ENCODE measurements at regions of chr11 and their contacts with region 1.

Region 1: GRCh38 chr11:44556735-44557409 is 8.6 kb upstream of the CD82 start:
- DNase-seq: peak; percentile 43 to 79 (median 70)
- ATAC-seq: peak; percentile 71
- H3K4me3 ChIP-seq: no peak overlapping the region
- H3K4me3 Mint-ChIP-seq: no peak overlapping the region
- H3K27ac ChIP-seq: no peak overlapping the region
- H3K27ac Mint-ChIP-seq: no peak overlapping the region
- H3K4me1 ChIP-seq: peaks cover 11% of the 10 kb centered on the region
- H3K4me1 Mint-ChIP-seq: peaks cover 11% of the 10 kb centered on the region
- H3K27me3 ChIP-seq: no peaks in the 10 kb centered on the region
- H3K27me3 Mint-ChIP-seq: no peaks in the 10 kb centered on the region
- CTCF ChIP-seq: peak; percentile 76

Region 2: GRCh38 chr11:44434191-44434590 is 122.7 kb before region 1 on chr11:
- CTCF ChIA-PET with region 1: no interaction called
- POLR2A ChIA-PET with region 1: no interaction called
- intact Hi-C with region 1: no loop called
- DNase-seq: no peak
- ATAC-seq: no peak
- H3K4me3 ChIP-seq: no peak overlapping the region
- H3K4me3 Mint-ChIP-seq: no peak overlapping the region
- H3K27ac ChIP-seq: no peak overlapping the region
- H3K27ac Mint-ChIP-seq: no peak overlapping the region
- H3K4me1 ChIP-seq: no peaks in the 10 kb centered on the region
- H3K4me1 Mint-ChIP-seq: no peaks in the 10 kb centered on the region
- H3K27me3 ChIP-seq: peaks cover 0 to 3% of the 10 kb centered on the region in 2 experiments
- H3K27me3 Mint-ChIP-seq: peaks cover 26% of the 10 kb centered on the region
- CTCF ChIP-seq: no peak

Region 3: GRCh38 chr11:44589301-44589700 is 32.4 kb after region 1 on chr11:
- CTCF ChIA-PET with region 1: interaction called, 14 read pairs
- POLR2A ChIA-PET with region 1: no interaction called
- intact Hi-C with region 1: no loop called
- DNase-seq: no peak
- ATAC-seq: no peak
- H3K4me3 ChIP-seq: no peak overlapping the region
- H3K4me3 Mint-ChIP-seq: no peak overlapping the region
- H3K27ac ChIP-seq: no peak overlapping the region
- H3K27ac Mint-ChIP-seq: peak overlapping the region; percentile 13
- H3K4me1 ChIP-seq: peaks cover 6% of the 10 kb centered on the region
- H3K4me1 Mint-ChIP-seq: peaks cover 6% of the 10 kb centered on the region
- H3K27me3 ChIP-seq: no peaks in the 10 kb centered on the region
- H3K27me3 Mint-ChIP-seq: no peaks in the 10 kb centered on the region
- CTCF ChIP-seq: no peak

Region 4: DNA sequence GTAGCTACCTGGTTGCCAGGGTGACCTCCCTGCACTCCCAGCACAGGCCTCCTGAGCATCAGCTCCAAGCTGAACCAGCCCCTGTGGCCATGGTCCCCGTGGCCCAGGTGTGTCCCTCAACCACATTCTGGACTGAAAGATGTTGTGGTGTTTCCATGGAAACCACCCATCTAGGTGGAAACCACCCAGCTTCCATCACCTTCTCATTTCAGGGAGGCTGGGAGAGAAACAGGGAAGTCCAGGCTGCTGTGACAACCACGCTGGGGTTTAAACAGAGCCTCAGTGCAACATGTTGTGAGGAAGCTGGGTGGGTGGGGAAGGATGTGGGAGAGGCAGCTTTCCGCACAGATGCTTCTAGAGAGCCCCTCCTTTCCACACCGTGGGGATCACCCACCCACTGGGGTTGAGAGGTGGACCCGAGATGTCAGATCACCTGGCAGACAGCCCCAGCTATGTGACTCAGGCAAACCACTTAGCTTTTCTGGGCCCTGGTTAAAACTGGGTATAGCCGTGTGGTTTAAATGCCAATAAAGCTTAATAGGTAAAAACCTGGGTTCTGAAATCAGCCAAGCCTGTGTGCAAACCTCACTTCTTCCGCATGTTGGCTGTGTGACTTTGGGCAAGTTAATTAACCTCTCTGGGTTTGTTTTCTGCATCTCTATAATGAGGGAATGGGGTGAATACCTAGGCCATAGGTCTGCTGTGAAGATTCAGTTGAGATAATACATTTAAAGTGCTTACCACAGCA is 55.0 kb after region 1 on chr11:
- CTCF ChIA-PET with region 1: interaction called, 625 read pairs
- POLR2A ChIA-PET with region 1: interaction called, 8 read pairs
- intact Hi-C with region 1: loop called (anchors 1 kb)
- DNase-seq: peak; percentile 25 to 90 (median 79)
- ATAC-seq: peak; percentile 86
- H3K4me3 ChIP-seq: no peak overlapping the region
- H3K4me3 Mint-ChIP-seq: peak overlapping the region; percentile 42
- H3K27ac ChIP-seq: peak overlapping the region in 1 of 2 experiments; percentile 48
- H3K27ac Mint-ChIP-seq: peak overlapping the region; percentile 97
- H3K4me1 ChIP-seq: peaks cover 67% of the 10 kb centered on the region
- H3K4me1 Mint-ChIP-seq: peaks cover 66% of the 10 kb centered on the region
- H3K27me3 ChIP-seq: no peaks in the 10 kb centered on the region
- H3K27me3 Mint-ChIP-seq: no peaks in the 10 kb centered on the region
- CTCF ChIP-seq: no peak

Region 5: DNA sequence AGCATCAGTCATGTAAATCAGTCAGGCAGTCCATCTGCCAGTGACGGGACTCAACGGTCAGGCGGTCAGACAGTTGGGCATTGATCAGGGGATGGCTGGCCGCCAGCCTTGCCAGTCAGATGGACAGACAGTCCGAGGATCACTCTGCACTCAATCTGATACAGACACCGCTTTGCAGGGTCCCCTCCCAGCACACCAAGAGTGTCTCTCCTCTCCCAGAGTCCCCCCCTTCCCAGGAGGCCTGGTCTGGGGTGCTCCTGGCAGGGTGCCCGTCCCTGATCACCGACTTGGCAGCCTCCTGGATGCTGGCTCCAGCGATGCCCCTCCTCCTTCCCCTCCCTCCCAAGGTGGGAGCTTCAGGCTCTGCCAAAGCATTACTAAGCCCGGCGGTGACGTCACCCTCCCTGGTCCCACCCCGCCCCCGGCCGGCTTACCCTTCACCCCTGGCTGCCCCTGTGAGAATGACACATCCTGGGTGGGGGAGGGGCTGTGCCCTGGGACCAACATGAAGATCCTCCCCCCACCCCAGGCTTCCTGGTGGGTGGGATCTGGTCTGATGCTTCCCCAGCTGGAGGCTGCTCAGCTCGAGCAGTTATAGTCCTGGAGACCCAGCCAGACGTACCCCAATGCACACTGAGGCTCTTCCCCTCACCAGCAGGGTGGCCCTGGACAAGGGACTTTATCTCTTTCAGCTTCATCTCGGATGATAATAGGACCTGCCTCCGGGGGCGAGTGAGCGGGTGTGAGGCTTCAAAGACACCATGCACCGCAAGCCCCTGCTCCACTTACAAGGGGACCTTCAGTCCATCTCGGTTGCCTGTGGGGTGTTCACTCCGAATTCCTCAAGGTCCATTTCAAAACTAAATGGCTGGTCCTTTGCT is 77.8 kb after region 1 on chr11:
- CTCF ChIA-PET with region 1: interaction called, 24 read pairs
- POLR2A ChIA-PET with region 1: no interaction called
- intact Hi-C with region 1: no loop called
- DNase-seq: peak in 3 of 9 experiments; percentile 3 to 41 (median 36)
- ATAC-seq: no peak
- H3K4me3 ChIP-seq: no peak overlapping the region
- H3K4me3 Mint-ChIP-seq: no peak overlapping the region
- H3K27ac ChIP-seq: no peak overlapping the region
- H3K27ac Mint-ChIP-seq: no peak overlapping the region
- H3K4me1 ChIP-seq: no peaks in the 10 kb centered on the region
- H3K4me1 Mint-ChIP-seq: peaks cover 3% of the 10 kb centered on the region
- H3K27me3 ChIP-seq: peaks cover 0 to 5% of the 10 kb centered on the region in 2 experiments
- H3K27me3 Mint-ChIP-seq: peaks cover 33% of the 10 kb centered on the region
- CTCF ChIP-seq: no peak

Region 6: GRCh38 chr11:44727373-44728287 is 170.8 kb after region 1 on chr11:
- CTCF ChIA-PET with region 1: interaction called, 5 read pairs
- POLR2A ChIA-PET with region 1: no interaction called
- intact Hi-C with region 1: loop called in 1 of 2 experiments (anchors 2 kb)
- DNase-seq: peak; percentile 55 to 87 (median 74)
- ATAC-seq: peak; percentile 71
- H3K4me3 ChIP-seq: peak overlapping the region; percentile 63 to 70
- H3K4me3 Mint-ChIP-seq: peak overlapping the region; percentile 84
- H3K27ac ChIP-seq: no peak overlapping the region
- H3K27ac Mint-ChIP-seq: peak overlapping the region; percentile 27
- H3K4me1 ChIP-seq: peaks cover 18% of the 10 kb centered on the region
- H3K4me1 Mint-ChIP-seq: peaks cover 30% of the 10 kb centered on the region
- H3K27me3 ChIP-seq: peaks cover 3 to 6% of the 10 kb centered on the region in 2 experiments
- H3K27me3 Mint-ChIP-seq: peaks cover 7% of the 10 kb centered on the region
- CTCF ChIP-seq: peak; percentile 90

Region 7: GRCh38 chr11:44775366-44775984 is 218.6 kb after region 1 on chr11:
- CTCF ChIA-PET with region 1: interaction called, 10 read pairs
- POLR2A ChIA-PET with region 1: no interaction called
- intact Hi-C with region 1: loop called in 1 of 2 experiments (anchors 2 kb)
- DNase-seq: peak; percentile 10 to 73 (median 52)
- ATAC-seq: peak; percentile 49
- H3K4me3 ChIP-seq: no peak overlapping the region
- H3K4me3 Mint-ChIP-seq: no peak overlapping the region
- H3K27ac ChIP-seq: no peak overlapping the region
- H3K27ac Mint-ChIP-seq: no peak overlapping the region
- H3K4me1 ChIP-seq: no peaks in the 10 kb centered on the region
- H3K4me1 Mint-ChIP-seq: peaks cover 5% of the 10 kb centered on the region
- H3K27me3 ChIP-seq: no peaks in the 10 kb centered on the region
- H3K27me3 Mint-ChIP-seq: no peaks in the 10 kb centered on the region
- CTCF ChIP-seq: peak; percentile 76

Region 8: DNA sequence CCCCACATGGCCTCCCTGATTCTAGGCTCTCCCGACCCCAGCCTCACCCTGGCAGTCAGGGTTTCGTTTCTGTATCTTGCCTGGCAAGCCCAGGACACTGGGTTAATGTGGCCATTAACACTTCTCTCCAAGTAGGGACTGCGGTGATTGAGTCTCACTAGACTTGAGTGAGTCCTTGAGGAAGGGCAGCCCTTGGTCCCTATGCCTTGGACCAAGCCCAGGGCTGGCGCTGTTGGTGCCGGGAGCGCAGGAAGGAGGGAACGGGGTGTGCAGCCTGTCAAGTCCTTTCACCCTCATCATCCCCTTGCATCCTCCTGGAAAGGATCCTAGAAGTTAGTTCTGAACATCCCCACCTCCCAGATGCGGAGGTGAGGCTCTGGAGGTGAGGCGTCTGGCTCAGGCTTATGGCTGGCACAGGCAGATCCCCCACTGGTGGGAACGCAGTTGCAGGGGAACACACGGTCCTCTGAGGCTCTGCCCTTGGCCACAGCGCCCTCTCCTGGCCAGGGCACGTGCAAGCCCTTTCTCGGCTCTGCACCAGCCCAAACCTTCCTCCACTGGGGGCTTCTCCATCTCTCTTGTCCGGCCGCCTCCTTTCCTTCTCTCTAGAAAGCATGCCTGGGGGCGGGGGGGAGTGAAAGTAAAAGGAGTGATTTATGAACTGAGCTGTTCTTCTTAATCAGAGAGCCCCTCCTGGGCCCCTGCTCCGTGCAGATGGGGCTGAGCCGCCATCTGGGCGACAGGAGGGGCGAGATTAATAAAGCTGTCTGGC is 337.2 kb after region 1 on chr11:
- CTCF ChIA-PET with region 1: no interaction called
- POLR2A ChIA-PET with region 1: no interaction called
- intact Hi-C with region 1: loop called (anchors 5 kb)
- DNase-seq: peak in 8 of 9 experiments; percentile 48 to 72 (median 60)
- ATAC-seq: peak; percentile 55
- H3K4me3 ChIP-seq: no peak overlapping the region
- H3K4me3 Mint-ChIP-seq: no peak overlapping the region
- H3K27ac ChIP-seq: no peak overlapping the region
- H3K27ac Mint-ChIP-seq: no peak overlapping the region
- H3K4me1 ChIP-seq: no peaks in the 10 kb centered on the region
- H3K4me1 Mint-ChIP-seq: no peaks in the 10 kb centered on the region
- H3K27me3 ChIP-seq: no peaks in the 10 kb centered on the region
- H3K27me3 Mint-ChIP-seq: no peaks in the 10 kb centered on the region
- CTCF ChIP-seq: peak; percentile 54

Measured in CD8-positive, alpha-beta T cell (primary cell).